Naive thymus-derived CD4-positive, alpha-beta T cell (primary cell): ENCODE measurements at regions of chr5 and their contacts with region 1.

Region 1: DNA sequence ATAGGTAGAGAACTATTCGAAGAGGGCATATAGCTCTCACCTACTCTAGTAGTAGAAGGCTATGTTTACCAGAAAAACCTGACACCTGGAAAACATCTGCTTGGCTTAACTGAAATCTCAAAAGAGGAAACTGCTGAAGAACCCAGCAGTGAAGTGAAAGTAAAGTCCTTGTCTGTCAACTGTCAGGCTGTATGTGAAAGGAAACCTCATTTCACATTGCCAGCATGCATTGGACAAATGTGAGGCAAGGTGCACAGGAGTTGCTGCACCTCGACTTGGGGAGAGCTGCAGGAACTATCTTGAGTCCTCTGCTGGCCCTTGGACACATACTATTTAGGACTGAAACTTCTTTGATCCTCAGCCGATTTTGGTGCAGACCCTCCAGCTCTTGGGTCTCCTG is 53.3 kb downstream of the NREP start:
- DNase-seq: peak in 3 of 9 donors; percentile 14 to 27 (median 18)
- ATAC-seq: peak; percentile 47
- H3K4me3 ChIP-seq: no peak overlapping the region
- H3K4me3 Mint-ChIP-seq: peak overlapping the region in 6 of 10 donors; percentile 8 to 58 (median 45)
- H3K27ac ChIP-seq: no peak overlapping the region
- H3K27ac Mint-ChIP-seq: peak overlapping the region in 3 of 9 donors; percentile 13 to 47 (median 13)
- H3K4me1 ChIP-seq: no peaks in the 10 kb centered on the region
- H3K4me1 Mint-ChIP-seq: peaks cover 4 to 19% (median 6%) of the 10 kb centered on the region in 7 donors
- H3K27me3 ChIP-seq: no peaks in the 10 kb centered on the region
- H3K27me3 Mint-ChIP-seq: peaks cover 0 to 12% (median 8%) of the 10 kb centered on the region in 5 donors

Region 2: GRCh38 chr5:111742177-111742994 is 38.7 kb after region 1 on chr5:
- CTCF ChIA-PET with region 1: no interaction called
- POLR2A ChIA-PET with region 1: no interaction called
- intact Hi-C with region 1: loop called in 1 of 2 experiments (anchors 5 kb)
- DNase-seq: no peak
- ATAC-seq: no peak
- H3K4me3 ChIP-seq: no peak overlapping the region
- H3K4me3 Mint-ChIP-seq: peak overlapping the region in 8 of 10 donors; percentile 22 to 77 (median 49)
- H3K27ac ChIP-seq: no peak overlapping the region
- H3K27ac Mint-ChIP-seq: peak overlapping the region in 4 of 9 donors; percentile 34 to 78 (median 70)
- H3K4me1 ChIP-seq: no peaks in the 10 kb centered on the region
- H3K4me1 Mint-ChIP-seq: peaks cover 0 to 46% (median 18%) of the 10 kb centered on the region in 7 donors
- H3K27me3 ChIP-seq: no peaks in the 10 kb centered on the region
- H3K27me3 Mint-ChIP-seq: peaks cover 0 to 15% (median 11%) of the 10 kb centered on the region in 5 donors